ENCODE measurements at regions of chr11 and their contacts with region 1.

Region 1: GRCh38 chr11:111878849-111879636 is at the starts of genes CFAP68 and FDXACB1:
- DNase-seq: peak; percentile 95 to 98 (median 98)
- H3K4me3 ChIP-seq: peak within 1 kb of the TSS; percentile 54 to 99 (median 81)
- H3K27ac ChIP-seq: peak within 1 kb of the TSS; percentile 77 to 99 (median 95)
- H3K27me3 ChIP-seq: no peaks in the 10 kb centered on the region
- CTCF ChIP-seq: peak; percentile 91 to 100 (median 98)
- total RNA-seq, gene CFAP68: 7.3 to 30.0 (median 16.4) TPM
- total RNA-seq, gene FDXACB1: 0.69 to 3.4 (median 1.9) TPM

Region 2: DNA sequence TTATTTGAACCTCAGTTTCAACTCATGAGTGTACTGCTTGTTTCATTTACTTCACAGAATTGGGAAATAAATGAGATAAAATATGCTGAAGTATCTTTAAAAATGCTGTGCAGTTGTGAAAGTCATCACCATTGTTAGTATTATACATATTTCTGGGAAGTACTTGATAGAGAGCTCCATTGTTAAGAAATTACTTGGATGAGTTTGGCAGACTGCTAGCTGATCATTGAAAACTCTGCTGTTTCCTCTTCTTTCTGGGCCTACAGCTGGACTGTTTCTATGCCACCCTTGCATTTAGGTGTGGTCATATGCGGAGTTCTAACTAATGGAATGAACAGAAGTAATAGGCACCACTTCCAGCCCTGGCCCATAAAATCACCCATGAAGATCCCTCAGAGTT is 266.8 kb before region 1 on chr11:
- intact Hi-C with region 1: no loop called
- DNase-seq: no peak
- H3K4me3 ChIP-seq: no peak overlapping the region
- H3K27ac ChIP-seq: peak overlapping the region in 27 of 59 donors; percentile 6 to 64 (median 35)
- H3K27me3 ChIP-seq: no peaks in the 10 kb centered on the region
- CTCF ChIP-seq: no peak

Region 3: GRCh38 chr11:111841370-111842053 is 37.5 kb before region 1 on chr11:
- intact Hi-C with region 1: no loop called
- DNase-seq: peak; percentile 85 to 98 (median 92)
- H3K4me3 ChIP-seq: peak overlapping the region in 10 of 59 donors; percentile 0 to 25 (median 15)
- H3K27ac ChIP-seq: peak overlapping the region in 48 of 59 donors; percentile 0 to 75 (median 44)
- H3K27me3 ChIP-seq: no peaks in the 10 kb centered on the region
- CTCF ChIP-seq: peak; percentile 86 to 99 (median 96)

Region 4: GRCh38 chr11:111911563-111912401 is 32.7 kb after region 1 on chr11 and contains the start of gene CRYAB:
- intact Hi-C with region 1: loop called (anchors 1 to 2 kb)
- DNase-seq: peak; percentile 87 to 97 (median 94)
- H3K4me3 ChIP-seq: peak within 1 kb of the TSS; percentile 44 to 88 (median 68)
- H3K27ac ChIP-seq: peak within 1 kb of the TSS; percentile 92 to 100 (median 99)
- H3K27me3 ChIP-seq: no peaks in the 10 kb centered on the region
- CTCF ChIP-seq: peak in 1 of 56 donors; percentile 7
- total RNA-seq, gene CRYAB: 265 to 3,917 (median 1,020) TPM

Region 5: GRCh38 chr11:111926505-111927391 is 47.7 kb after region 1 on chr11:
- intact Hi-C with region 1: loop called in 1 of 2 experiments (anchors 5 kb)
- DNase-seq: peak; percentile 93 to 99 (median 98)
- H3K4me3 ChIP-seq: peak overlapping the region; percentile 25 to 83 (median 61)
- H3K27ac ChIP-seq: peak overlapping the region; percentile 58 to 97 (median 92)
- H3K27me3 ChIP-seq: no peaks in the 10 kb centered on the region
- CTCF ChIP-seq: peak in 36 of 56 donors; percentile 3 to 53 (median 26)

Region 6: GRCh38 chr11:111938687-111939160 is 59.7 kb after region 1 on chr11:
- intact Hi-C with region 1: loop called in 1 of 2 experiments (anchors 2 kb)
- DNase-seq: peak in 1 of 10 donors; percentile 75
- H3K4me3 ChIP-seq: peak overlapping the region in 54 of 59 donors; percentile 7 to 86 (median 70)
- H3K27ac ChIP-seq: peak overlapping the region; percentile 51 to 96 (median 92)
- H3K27me3 ChIP-seq: no peaks in the 10 kb centered on the region
- CTCF ChIP-seq: peak in 1 of 56 donors; percentile 7

Region 7: DNA sequence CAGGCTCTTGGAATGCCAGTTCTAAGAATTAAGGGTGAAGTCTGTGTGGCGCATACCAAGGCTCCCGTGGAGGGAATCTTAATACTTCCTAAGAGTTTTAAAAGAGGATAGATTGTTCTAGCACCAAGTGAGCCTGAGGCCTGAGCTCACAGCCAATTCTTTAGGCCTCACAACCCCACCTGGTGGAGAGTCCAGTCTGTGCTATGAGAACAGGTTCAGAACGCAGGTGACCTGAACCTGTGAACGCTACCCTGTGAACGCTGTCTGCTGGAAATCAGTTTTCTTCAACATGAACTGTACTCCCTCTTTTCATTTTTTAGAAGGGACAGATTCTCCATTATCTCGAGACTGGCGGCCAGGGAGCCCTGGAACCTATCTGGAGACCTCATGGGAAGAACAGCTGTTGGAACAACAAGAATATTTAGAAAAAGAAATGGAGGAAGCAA is 103.0 kb after region 1 on chr11:
- intact Hi-C with region 1: loop called in 1 of 2 experiments (anchors 2 kb)
- DNase-seq: peak in 6 of 10 donors; percentile 33 to 69 (median 58)
- H3K4me3 ChIP-seq: peak overlapping the region in 23 of 59 donors; percentile 1 to 85 (median 36)
- H3K27ac ChIP-seq: peak overlapping the region; percentile 82 to 99 (median 98)
- H3K27me3 ChIP-seq: no peaks in the 10 kb centered on the region
- CTCF ChIP-seq: peak; percentile 35 to 75 (median 61)

Region 8: GRCh38 chr11:112086422-112087191 is 207.6 kb after region 1 on chr11 and contains the starts of genes SDHD and TIMM8B:
- intact Hi-C with region 1: loop called in 1 of 2 experiments (anchors 2 kb)
- DNase-seq: peak; percentile 88 to 97 (median 95)
- H3K4me3 ChIP-seq: peak within 1 kb of the TSS; percentile 68 to 100 (median 94)
- H3K27ac ChIP-seq: peak within 1 kb of the TSS in 55 of 59 donors; percentile 14 to 94 (median 76)
- H3K27me3 ChIP-seq: no peaks in the 10 kb centered on the region
- CTCF ChIP-seq: peak in 52 of 56 donors; percentile 25 to 73 (median 56)
- total RNA-seq, gene SDHD: 43.8 to 85.0 (median 65.3) TPM
- total RNA-seq, gene TIMM8B: 25.1 to 51.5 (median 35.6) TPM

Region 9: GRCh38 chr11:112280268-112281126 is 401.5 kb after region 1 on chr11:
- intact Hi-C with region 1: loop called in 1 of 2 experiments (anchors 10 kb)
- DNase-seq: peak; percentile 24 to 78 (median 64)
- H3K4me3 ChIP-seq: peak overlapping the region; percentile 36 to 79 (median 62)
- H3K27ac ChIP-seq: peak overlapping the region in 50 of 59 donors; percentile 16 to 88 (median 70)
- H3K27me3 ChIP-seq: no peaks in the 10 kb centered on the region
- CTCF ChIP-seq: peak; percentile 36 to 80 (median 69)